Activated CD4-positive, alpha-beta memory T cell treated with anti-CD3 and anti-CD28 coated beads for 36 hours (primary cell): ENCODE measurements at regions of chr3 and their contacts with region 1.

Region 1: DNA sequence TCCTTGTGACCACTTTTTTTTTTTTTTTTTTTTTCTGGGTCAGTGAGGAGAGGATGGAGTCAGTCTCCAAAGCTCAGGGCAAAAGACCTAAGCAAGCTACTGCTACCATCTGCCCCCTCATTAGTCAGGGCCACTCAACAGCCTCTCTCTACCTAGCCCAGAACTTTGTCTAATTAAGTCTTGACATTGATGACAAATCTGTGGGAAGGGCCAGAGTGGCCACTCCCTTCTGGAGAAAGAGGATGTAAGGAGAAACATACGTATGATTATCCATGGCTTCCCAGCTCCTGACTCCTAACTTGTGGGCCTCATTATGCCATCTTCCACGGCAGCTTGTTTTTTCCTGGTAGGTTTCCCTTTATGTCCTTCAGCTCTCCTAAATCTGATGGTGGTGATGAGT is 37.9 kb downstream of the NR1I2 start:
- DNase-seq: no peak
- H3K4me3 Mint-ChIP-seq: no peak overlapping the region
- H3K27ac Mint-ChIP-seq: no peak overlapping the region
- H3K4me1 Mint-ChIP-seq: peaks cover 2% of the 10 kb centered on the region
- H3K27me3 Mint-ChIP-seq: no peaks in the 10 kb centered on the region

Region 2: GRCh38 chr3:120182724-120183524 is 363.1 kb after region 1 on chr3:
- CTCF ChIA-PET with region 1: no interaction called
- POLR2A ChIA-PET with region 1: no interaction called
- intact Hi-C with region 1: loop called (anchors 5 kb)
- DNase-seq: no peak
- H3K4me3 Mint-ChIP-seq: no peak overlapping the region
- H3K27ac Mint-ChIP-seq: no peak overlapping the region
- H3K4me1 Mint-ChIP-seq: no peaks in the 10 kb centered on the region
- H3K27me3 Mint-ChIP-seq: peaks cover 4% of the 10 kb centered on the region

Region 3: GRCh38 chr3:120198305-120198878 is 378.6 kb after region 1 on chr3:
- CTCF ChIA-PET with region 1: no interaction called
- POLR2A ChIA-PET with region 1: no interaction called
- intact Hi-C with region 1: loop called (anchors 2 kb)
- DNase-seq: no peak
- H3K4me3 Mint-ChIP-seq: no peak overlapping the region
- H3K27ac Mint-ChIP-seq: no peak overlapping the region
- H3K4me1 Mint-ChIP-seq: no peaks in the 10 kb centered on the region
- H3K27me3 Mint-ChIP-seq: no peaks in the 10 kb centered on the region